ENCODE measurements at regions of chr16 and their contacts with region 1.

Region 1: DNA sequence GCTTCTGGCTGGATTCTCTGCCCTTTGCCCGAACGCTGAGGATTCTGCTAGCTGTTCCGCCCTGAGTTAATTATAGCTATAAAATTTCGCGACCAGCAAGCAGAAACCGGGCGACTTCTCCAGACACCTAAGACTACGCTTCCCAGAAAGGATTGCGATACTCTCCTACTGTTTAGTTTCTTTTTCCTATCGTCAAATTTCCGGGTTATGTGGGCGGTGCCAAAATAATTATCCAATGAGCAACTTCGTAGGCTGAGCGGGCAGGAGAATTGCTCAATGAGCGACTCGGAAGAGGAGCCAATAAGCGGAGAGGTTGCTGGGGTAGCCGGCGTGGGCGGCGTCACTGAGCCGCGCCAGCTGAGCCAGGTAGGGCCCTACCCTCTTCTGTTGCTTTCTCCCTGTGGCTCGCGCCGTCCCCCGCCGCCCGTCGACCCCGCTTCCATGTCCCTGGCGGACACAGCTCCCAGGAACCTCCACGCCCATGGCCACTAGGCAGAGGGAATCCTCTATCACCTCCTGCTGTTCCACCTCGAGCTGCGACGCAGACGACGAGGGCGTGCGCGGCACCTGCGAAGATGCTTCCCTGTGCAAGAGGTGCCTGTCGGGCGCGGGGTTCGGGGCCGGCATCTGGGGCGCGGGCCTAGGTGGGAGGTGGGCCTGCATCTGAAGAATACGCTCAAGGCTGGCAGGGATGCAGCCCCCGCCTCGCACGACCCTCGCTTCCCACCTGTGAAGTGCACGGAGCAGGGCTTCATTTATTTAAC is at the start of gene LCMT1:
- DNase-seq: peak; percentile 98
- H3K4me3 Mint-ChIP-seq: peak within 1 kb of the TSS; percentile 98
- H3K27ac Mint-ChIP-seq: peak within 1 kb of the TSS; percentile 99
- H3K4me1 Mint-ChIP-seq: peaks cover 47% of the 10 kb centered on the region
- H3K27me3 Mint-ChIP-seq: no peaks in the 10 kb centered on the region
- total RNA-seq, gene LCMT1: 32.8 and 38.7 TPM in 2 replicates

Region 2: GRCh38 chr16:25066747-25067631 is 44.6 kb before region 1 on chr16:
- intact Hi-C with region 1: loop called (anchors 2 kb)
- DNase-seq: peak; percentile 95
- H3K4me3 Mint-ChIP-seq: peak overlapping the region; percentile 92
- H3K27ac Mint-ChIP-seq: peak overlapping the region; percentile 87
- H3K4me1 Mint-ChIP-seq: peaks cover 35% of the 10 kb centered on the region
- H3K27me3 Mint-ChIP-seq: no peaks in the 10 kb centered on the region

Region 3: GRCh38 chr16:25093208-25094061 is 18.1 kb before region 1 on chr16:
- intact Hi-C with region 1: loop called (anchors 2 kb)
- DNase-seq: peak; percentile 64
- H3K4me3 Mint-ChIP-seq: peak overlapping the region; percentile 62
- H3K27ac Mint-ChIP-seq: peak overlapping the region; percentile 84
- H3K4me1 Mint-ChIP-seq: peaks cover 31% of the 10 kb centered on the region
- H3K27me3 Mint-ChIP-seq: peaks cover 4% of the 10 kb centered on the region

Region 4: DNA sequence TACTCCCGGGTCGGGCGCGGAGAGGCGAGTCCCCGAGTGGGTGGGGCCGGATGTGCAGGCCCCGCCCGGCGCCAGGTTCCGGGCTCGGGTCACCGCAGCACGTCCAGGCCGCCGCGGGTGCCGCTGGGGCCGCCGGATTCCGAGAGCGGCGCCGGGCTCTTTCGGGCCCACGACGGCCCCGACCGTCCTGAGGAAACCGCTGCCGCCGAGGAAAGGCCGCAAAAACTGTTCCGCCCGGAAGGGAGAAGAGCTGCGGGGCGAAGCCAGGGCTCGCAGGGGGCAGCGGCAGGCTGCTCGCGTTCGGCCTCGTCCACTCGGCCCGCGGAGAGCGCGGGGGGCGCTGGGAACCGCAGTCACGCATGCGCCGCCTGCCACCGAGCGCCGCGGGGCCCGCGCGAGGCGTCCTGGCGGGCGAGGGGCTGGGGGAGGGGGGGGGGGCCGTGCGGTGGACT is 145.9 kb after region 1 on chr16 and contains the start of gene ZKSCAN2:
- intact Hi-C with region 1: loop called (anchors 1 kb)
- DNase-seq: peak; percentile 96
- H3K4me3 Mint-ChIP-seq: peak within 1 kb of the TSS; percentile 91
- H3K27ac Mint-ChIP-seq: peak within 1 kb of the TSS; percentile 97
- H3K4me1 Mint-ChIP-seq: peaks cover 45% of the 10 kb centered on the region
- H3K27me3 Mint-ChIP-seq: no peaks in the 10 kb centered on the region
- total RNA-seq, gene ZKSCAN2: 6.3 and 6.8 TPM in 2 replicates